ENCODE measurements at regions of chr5 and their contacts with region 1.

Region 1: GRCh38 chr5:134289509-134290113 is 63.7 kb upstream of the PPP2CA start:
- DNase-seq: no peak
- ATAC-seq: peak; percentile 94

Region 2: DNA sequence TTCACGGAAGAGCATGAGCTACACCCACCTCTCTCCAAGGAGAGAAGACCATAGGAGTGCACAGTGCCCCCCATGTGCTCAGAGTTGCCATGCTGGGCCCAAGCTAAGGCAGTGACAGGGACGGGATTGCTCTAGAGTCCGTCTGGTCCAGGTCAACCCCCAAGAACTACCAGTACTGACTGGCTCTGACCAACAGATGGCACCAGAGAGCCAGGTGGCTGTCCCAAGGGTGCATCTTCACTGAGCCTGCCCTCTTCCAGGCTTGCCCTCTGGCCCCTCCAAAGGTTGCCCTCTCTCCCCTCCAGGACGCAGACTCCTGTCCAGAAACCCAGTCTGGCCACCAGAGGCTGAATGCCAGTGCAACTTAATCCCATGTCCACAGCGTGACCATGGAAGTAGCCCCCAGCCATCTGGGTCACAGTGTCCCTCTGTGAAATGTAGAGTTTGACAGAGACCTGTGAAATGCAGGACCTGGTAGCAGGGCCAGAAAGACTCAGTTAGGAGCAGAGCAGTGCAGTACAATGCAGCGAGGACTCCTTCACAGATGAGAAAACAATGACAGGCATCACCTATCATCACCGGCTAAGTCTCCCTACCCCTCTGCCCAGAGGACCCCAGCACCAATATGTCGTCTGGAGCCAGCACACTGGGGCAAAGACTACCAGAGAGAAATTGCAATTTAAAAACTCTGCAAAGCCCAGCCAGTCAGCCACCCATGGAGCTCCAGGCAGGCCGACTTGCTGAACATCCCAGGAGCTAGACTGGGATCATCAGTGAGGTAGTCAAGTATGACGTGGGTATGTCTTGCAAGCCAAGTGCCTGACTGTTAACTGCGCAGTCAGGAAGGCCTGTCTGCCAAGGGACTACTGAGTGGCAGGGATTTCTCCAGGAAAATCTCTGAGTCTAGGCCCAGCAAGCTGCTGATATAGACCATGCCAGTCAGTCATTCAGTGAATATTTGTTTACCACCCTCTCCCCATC is 105.2 kb before region 1 on chr5:
- intact Hi-C with region 1: loop called (anchors 1 kb)
- DNase-seq: peak; percentile 72
- ATAC-seq: peak; percentile 87

Measured in left ventricle myocardium superior (tissue), 1 donor.